ENCODE measurements at regions of chr1 and their contacts with region 1.

Region 1: DNA sequence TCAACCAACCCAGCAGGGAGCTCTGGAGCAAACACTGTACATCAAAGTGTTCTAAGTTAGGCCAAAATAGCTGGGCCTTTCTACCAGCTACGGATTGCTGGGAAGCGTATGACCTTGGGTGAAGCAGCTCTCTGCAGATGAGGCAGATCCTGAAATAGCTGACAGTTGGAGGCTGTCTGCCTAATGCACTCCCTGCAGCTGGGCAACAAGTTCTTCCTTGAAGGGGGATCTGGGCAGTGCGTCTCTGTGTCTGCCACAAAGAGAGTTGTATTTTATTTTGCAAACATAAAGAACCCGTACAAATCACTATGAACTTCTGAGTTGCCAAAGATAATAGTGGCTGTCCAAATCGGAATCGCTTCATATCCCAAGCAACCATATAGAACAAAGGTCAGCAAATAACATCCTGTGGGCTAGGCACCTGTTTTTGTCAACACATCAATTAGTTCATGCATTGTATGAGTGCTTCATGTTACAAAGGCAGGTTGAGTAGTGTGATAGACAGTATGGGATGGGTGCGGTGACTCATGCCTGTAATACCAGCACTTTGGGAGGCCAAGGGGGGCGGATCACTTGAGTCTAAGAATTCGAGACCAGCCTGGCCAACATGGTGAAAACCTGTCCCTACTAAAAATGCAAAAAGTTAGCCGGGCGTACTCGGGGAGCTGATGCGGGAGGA is 29.1 kb upstream of the KLF17 start:
- DNase-seq: peak; percentile 19
- ATAC-seq: no peak
- H3K4me3 Mint-ChIP-seq: no peak overlapping the region
- H3K27ac Mint-ChIP-seq: no peak overlapping the region
- H3K4me1 Mint-ChIP-seq: no peaks in the 10 kb centered on the region
- H3K27me3 Mint-ChIP-seq: peaks cover 29% of the 10 kb centered on the region

Region 2: DNA sequence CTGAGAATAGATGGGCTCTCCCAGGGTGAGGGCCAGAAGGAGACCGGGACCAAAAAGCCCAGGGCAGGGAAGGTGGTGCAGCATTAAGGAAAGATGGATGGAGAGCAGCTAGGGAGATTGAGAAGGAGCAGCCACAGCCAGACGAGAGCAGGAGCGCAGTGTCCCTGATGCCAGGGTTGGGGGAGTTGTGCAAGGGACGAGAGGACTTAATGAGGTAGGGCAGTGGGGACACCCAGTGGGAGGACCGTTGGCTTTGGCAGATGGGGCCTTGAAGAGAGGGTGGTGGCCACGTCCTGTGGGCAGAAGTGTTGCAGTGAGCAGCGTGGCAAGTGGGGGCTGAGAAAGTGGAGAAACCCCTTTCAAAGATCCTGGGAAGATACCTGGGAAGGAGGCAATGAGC is 477.6 kb before region 1 on chr1:
- CTCF ChIA-PET with region 1: no interaction called
- POLR2A ChIA-PET with region 1: no interaction called
- intact Hi-C with region 1: no loop called
- DNase-seq: no peak
- ATAC-seq: no peak
- H3K4me3 Mint-ChIP-seq: no peak overlapping the region
- H3K27ac Mint-ChIP-seq: no peak overlapping the region
- H3K4me1 Mint-ChIP-seq: no peaks in the 10 kb centered on the region
- H3K27me3 Mint-ChIP-seq: no peaks in the 10 kb centered on the region

Region 3: GRCh38 chr1:44237721-44238457 is 148.4 kb after region 1 on chr1:
- CTCF ChIA-PET with region 1: no interaction called
- POLR2A ChIA-PET with region 1: no interaction called
- intact Hi-C with region 1: loop called in 1 of 2 experiments (anchors 1 kb)
- DNase-seq: peak; percentile 74
- ATAC-seq: peak; percentile 88
- H3K4me3 Mint-ChIP-seq: no peak overlapping the region
- H3K27ac Mint-ChIP-seq: no peak overlapping the region
- H3K4me1 Mint-ChIP-seq: peaks cover 10% of the 10 kb centered on the region
- H3K27me3 Mint-ChIP-seq: no peaks in the 10 kb centered on the region

Region 4: GRCh38 chr1:44318097-44319088 is 228.9 kb after region 1 on chr1:
- CTCF ChIA-PET with region 1: interaction called, 4 read pairs
- POLR2A ChIA-PET with region 1: no interaction called
- intact Hi-C with region 1: loop called in 1 of 2 experiments (anchors 10 kb)
- DNase-seq: peak; percentile 66
- ATAC-seq: peak; percentile 42
- H3K4me3 Mint-ChIP-seq: no peak overlapping the region
- H3K27ac Mint-ChIP-seq: peak overlapping the region; percentile 11
- H3K4me1 Mint-ChIP-seq: peaks cover 5% of the 10 kb centered on the region
- H3K27me3 Mint-ChIP-seq: no peaks in the 10 kb centered on the region

Region 5: GRCh38 chr1:44377925-44378784 is 288.6 kb after region 1 on chr1:
- CTCF ChIA-PET with region 1: no interaction called
- POLR2A ChIA-PET with region 1: no interaction called
- intact Hi-C with region 1: no loop called
- DNase-seq: peak; percentile 68
- ATAC-seq: no peak
- H3K4me3 Mint-ChIP-seq: no peak overlapping the region
- H3K27ac Mint-ChIP-seq: no peak overlapping the region
- H3K4me1 Mint-ChIP-seq: no peaks in the 10 kb centered on the region
- H3K27me3 Mint-ChIP-seq: no peaks in the 10 kb centered on the region